ENCODE measurements at regions of chr3 and their contacts with region 1.

Region 1: DNA sequence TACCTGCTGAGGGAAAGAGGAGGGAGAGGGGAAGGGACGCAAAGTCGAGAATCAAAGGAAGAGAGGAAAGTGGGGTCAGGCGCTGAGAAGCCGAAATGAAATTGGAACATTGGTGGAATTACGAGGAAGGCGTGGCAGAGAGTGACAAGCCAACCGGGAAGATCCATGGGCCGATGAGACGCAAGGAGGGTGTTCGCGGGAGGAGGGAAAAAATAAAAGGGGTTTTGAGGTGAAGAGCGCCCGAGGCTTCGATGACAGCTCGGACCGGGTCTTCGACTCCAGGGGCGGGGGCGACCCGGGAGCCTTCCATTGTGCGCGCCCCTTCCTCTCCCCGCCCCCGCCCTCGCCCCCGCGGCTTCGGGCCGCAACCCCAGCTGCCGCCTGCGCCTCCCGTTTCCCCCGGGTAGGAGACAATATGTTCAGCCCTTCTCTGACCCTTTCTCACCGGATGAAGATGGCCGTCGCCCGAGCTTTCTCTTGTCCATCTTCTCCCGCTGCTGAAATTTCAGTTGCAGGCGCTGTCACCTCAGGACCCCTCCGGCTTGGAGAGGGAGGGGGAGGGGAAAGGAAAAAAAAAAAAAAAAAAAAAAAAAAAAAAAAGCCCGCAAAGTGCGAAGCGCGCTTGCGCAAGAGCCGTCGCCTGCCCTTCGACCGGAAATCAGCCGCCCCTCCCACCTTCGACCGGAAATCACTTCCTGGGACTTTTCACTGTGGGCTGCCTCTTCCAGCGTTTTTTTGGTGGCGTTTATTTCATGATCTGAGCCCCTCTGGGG is at the start of gene SENP7:
- DNase-seq: peak; percentile 88 to 90
- ATAC-seq: peak; percentile 87 to 93 (median 90)
- H3K4me3 ChIP-seq: peak within 1 kb of the TSS; percentile 67 to 99 (median 84)
- H3K27ac ChIP-seq: peak within 1 kb of the TSS; percentile 85 to 99 (median 94)
- H3K4me1 ChIP-seq: peaks cover 3 to 33% (median 17%) of the 10 kb centered on the region in 9 donors
- H3K27me3 ChIP-seq: peaks cover 0 to 11% (median 0%) of the 10 kb centered on the region in 7 donors
- CTCF ChIP-seq: no peak
- total RNA-seq, gene SENP7: 8.5 to 11.1 (median 10.0) TPM

Region 2: DNA sequence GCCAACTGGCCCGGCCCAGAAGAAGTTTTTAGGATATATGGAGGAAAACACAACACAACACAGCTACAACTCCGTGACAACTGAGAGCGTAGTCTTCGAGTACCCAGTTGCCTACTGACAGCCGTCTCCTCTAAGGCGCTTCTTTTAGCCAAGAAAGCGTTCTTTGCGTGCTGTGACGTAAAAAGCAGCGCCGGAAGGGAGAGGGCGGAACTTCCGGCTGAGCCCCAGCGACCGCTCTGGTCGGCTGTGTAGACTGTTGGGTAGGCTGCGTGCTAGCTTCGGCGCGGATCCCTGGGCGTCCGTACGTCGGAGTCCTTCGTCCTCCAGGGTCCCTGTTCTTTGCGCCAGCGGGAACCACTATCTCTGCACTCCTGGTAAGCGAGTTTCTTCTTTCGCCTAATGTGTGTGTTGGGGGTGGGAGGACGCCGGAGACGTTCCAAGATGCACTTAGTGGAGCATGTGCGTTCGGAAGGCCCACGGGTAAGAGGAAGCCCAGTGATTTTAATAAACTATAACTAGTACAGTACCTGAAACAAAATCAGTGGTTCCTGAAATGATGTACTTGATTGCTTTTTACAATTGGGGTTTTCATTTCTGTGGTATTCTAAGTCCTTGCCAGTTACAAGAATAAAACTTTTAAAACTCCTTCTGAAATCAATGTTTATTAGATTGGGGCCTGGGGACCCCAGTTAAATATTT is 48.9 kb after region 1 on chr3 and contains the start of gene TRMT10C:
- intact Hi-C with region 1: loop called in 3 of 10 experiments (anchors 2 to 5 kb)
- DNase-seq: peak; percentile 91 to 93
- ATAC-seq: peak; percentile 98 to 100 (median 100)
- H3K4me3 ChIP-seq: peak within 1 kb of the TSS; percentile 58 to 88 (median 75)
- H3K27ac ChIP-seq: peak within 1 kb of the TSS; percentile 75 to 94 (median 91)
- H3K4me1 ChIP-seq: peaks cover 3 to 36% (median 16%) of the 10 kb centered on the region in 9 donors
- H3K27me3 ChIP-seq: peaks cover 0 to 26% (median 18%) of the 10 kb centered on the region in 7 donors
- CTCF ChIP-seq: no peak
- total RNA-seq, gene TRMT10C: 20.9 to 29.7 (median 24.5) TPM

Region 3: GRCh38 chr3:101827211-101828174 is 314.7 kb after region 1 on chr3:
- intact Hi-C with region 1: no loop called
- DNase-seq: peak; percentile 55 to 83
- ATAC-seq: peak; percentile 83 to 93 (median 88)
- H3K4me3 ChIP-seq: peak overlapping the region; percentile 38 to 72 (median 57)
- H3K27ac ChIP-seq: peak overlapping the region; percentile 72 to 92 (median 85)
- H3K4me1 ChIP-seq: peaks cover 5 to 57% (median 34%) of the 10 kb centered on the region in 9 donors
- H3K27me3 ChIP-seq: no peaks in the 10 kb centered on the region
- CTCF ChIP-seq: no peak

Measured in heart right ventricle (tissue), 16 donors.